Prostate gland (tissue), 2 donors: ENCODE measurements at regions of chr1 and their contacts with region 1.

Region 1: DNA sequence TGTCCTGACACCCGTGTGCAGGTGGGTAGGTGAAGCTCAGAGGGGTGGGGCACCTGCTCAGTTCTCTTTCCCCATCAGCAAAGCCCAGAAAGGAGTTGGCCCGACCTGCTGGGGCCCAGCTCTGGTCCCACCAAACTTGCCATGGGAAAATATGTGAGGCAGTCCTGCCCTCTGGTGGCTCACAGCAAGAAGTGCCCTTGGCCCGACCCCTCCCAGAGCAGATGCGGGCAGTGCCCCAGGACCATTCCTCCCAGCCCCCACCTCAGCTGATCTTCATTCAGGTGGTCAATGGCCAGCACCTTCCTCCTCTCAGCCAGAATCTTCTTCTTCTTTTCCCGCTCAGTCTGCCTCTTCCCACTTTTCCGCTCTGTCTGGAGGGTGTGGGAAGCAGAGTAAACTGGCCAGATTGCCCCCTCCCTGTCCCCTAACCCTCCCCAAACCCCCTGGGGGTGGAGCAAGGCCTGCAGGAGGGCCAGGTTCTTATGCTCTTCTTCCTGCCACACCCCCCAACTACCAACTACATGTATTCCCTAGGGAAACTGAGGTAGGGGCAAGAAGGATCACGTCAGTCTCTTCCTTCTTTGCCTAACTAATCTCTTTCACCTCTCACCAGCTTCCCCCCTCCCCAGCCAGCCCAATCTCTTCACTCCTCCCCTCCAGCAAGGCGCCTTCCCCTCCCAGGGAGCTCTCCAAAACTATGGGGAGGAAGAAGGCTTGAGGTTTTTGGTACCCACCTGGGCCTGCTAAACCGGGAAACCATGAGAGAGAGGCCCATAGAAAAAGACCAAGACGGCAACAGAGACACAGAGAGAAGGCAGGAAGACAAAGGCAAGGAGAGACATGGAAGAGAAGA is 15.6 kb downstream of the TNNT2 start:
- DNase-seq: peak; percentile 34
- H3K4me3 ChIP-seq: no peak overlapping the region
- H3K27ac ChIP-seq: no peak overlapping the region
- H3K4me1 ChIP-seq: no peaks in the 10 kb centered on the region
- H3K27me3 ChIP-seq: no peaks in the 10 kb centered on the region
- CTCF ChIP-seq: peak; percentile 50 to 92 (median 88)
- POLR2A ChIP-seq: no peak

Region 2: GRCh38 chr1:200971955-200972711 is 389.7 kb before region 1 on chr1:
- intact Hi-C with region 1: no loop called
- DNase-seq: peak; percentile 53
- H3K4me3 ChIP-seq: no peak overlapping the region
- H3K27ac ChIP-seq: no peak overlapping the region
- H3K4me1 ChIP-seq: no peaks in the 10 kb centered on the region
- H3K27me3 ChIP-seq: no peaks in the 10 kb centered on the region
- CTCF ChIP-seq: peak; percentile 69 to 96 (median 82)
- POLR2A ChIP-seq: no peak

Region 3: GRCh38 chr1:201254625-201255506 is 107.0 kb before region 1 on chr1:
- intact Hi-C with region 1: loop called (anchors 5 kb)
- DNase-seq: peak; percentile 51
- H3K4me3 ChIP-seq: no peak overlapping the region
- H3K27ac ChIP-seq: no peak overlapping the region
- H3K4me1 ChIP-seq: no peaks in the 10 kb centered on the region
- H3K27me3 ChIP-seq: no peaks in the 10 kb centered on the region
- CTCF ChIP-seq: peak; percentile 97 to 99 (median 99)
- POLR2A ChIP-seq: no peak